HEK293T (cell line): ENCODE measurements at regions of chr9 and their contacts with region 1.

Region 1: DNA sequence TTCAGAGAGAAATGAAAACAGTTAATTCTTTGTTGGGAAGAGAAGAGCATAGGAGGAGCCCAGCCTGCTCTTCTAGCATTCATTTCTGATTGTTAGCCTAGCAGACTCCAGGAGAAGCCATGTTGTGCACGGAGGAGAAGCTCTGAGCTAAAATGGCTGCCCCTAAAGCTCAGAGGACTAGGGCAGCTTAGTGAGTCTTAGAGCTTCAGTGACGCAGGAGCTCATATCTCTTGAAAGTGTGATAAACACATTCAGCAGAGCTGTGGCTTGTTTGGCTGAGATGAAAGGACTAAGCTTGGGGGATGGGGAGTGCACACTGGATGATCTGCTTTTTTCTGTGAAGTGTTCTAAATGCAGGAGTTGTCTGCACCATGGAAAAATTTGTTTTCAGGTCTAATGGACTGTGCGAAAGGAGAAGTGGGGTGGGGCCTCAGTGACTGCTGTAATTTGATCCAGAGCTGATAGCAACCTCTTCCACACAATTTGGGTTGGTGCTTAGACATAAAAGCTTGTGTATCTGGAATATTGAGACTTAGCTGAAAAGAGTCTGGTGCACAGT is 58.5 kb downstream of the ZNF462 start:
- DNase-seq: peak; percentile 56

Region 2: GRCh38 chr9:106305428-106306133 is 615.8 kb before region 1 on chr9:
- CTCF ChIA-PET with region 1: no interaction called
- POLR2A ChIA-PET with region 1: no interaction called
- DNase-seq: no peak

Region 3: DNA sequence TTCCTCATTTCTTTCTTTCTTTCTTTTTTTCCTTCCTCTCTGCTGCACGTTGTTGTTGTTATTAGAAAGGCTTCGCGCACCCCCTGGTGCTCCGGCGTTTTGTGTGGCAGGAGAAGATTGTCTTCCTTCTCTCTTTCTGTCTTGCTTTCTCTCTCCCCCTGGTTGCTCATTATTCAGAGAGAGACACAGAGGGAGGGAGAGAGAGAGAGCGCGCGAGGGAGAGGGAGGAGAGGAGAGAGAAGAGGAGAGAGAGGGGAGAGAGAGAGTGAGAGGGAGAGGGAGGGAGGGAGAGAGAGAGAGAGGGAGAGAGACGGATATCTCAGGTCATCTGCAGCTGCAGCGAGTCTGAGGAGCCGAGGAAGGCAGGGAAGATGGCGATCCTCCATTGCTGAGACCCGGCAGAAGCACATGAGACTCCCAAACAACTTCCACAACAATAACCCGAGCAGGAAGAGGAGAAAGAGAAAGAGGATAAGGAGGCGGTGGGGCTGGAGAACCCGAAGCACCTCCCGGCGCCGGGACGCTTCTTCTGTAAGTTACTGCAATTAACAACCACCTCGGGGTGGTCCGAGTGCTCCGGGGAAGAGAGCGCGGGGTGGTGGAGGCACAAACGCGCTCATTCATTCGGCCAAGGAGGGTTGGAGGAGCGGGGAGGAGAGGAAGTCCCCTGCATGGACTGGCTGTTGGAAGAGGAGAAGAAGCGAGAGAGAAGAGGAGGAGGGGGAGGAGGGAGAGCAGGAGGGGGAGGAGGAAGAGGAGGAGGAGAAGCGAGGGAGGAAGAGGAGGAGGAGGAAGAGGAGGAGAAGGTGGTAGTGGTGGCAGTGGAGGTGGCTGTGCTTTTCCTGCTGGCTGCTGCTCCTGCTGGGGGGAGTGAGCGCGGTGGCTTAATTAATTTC is 58.3 kb before region 1 on chr9 and contains the start of gene ZNF462:
- CTCF ChIA-PET with region 1: no interaction called
- POLR2A ChIA-PET with region 1: interaction called, 16 read pairs
- DNase-seq: peak; percentile 22